ENCODE measurements at regions of chr7 and their contacts with region 1.

Region 1: GRCh38 chr7:30564243-30564892 is 30.3 kb upstream of the GARS1 start:
- DNase-seq: peak; percentile 74 to 83
- H3K4me3 ChIP-seq: no peak overlapping the region
- H3K27ac ChIP-seq: no peak overlapping the region
- H3K4me1 ChIP-seq: peaks cover 15% of the 10 kb centered on the region
- H3K27me3 ChIP-seq: no peaks in the 10 kb centered on the region
- CTCF ChIP-seq: peak; percentile 97

Region 2: DNA sequence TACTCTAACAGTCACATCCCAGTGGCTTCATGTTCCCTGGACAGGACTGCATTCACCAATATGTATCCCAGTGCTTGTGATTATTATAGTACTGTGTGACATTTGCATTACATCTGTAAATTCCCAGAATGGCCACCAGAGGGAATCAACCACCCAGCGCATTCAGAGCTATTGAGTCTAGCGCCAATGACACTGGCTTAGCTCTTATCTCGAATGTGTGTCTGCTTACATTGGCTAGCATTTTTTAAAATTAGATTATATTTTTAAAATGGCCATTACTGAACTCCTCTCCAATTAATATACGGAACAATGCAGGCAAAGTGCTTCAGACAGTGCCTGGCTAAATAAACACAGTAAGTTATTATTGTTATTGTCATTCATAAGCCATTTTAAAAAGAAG is 1642.5 kb before region 1 on chr7:
- CTCF ChIA-PET with region 1: interaction called, 3 read pairs
- POLR2A ChIA-PET with region 1: no interaction called
- intact Hi-C with region 1: loop called (anchors 5 kb)
- DNase-seq: peak; percentile 29 to 65
- H3K4me3 ChIP-seq: no peak overlapping the region
- H3K27ac ChIP-seq: no peak overlapping the region
- H3K4me1 ChIP-seq: peaks cover 10% of the 10 kb centered on the region; the same call in 1 of the 2 replicates
- H3K27me3 ChIP-seq: no peaks in the 10 kb centered on the region
- CTCF ChIP-seq: peak; percentile 97

Region 3: DNA sequence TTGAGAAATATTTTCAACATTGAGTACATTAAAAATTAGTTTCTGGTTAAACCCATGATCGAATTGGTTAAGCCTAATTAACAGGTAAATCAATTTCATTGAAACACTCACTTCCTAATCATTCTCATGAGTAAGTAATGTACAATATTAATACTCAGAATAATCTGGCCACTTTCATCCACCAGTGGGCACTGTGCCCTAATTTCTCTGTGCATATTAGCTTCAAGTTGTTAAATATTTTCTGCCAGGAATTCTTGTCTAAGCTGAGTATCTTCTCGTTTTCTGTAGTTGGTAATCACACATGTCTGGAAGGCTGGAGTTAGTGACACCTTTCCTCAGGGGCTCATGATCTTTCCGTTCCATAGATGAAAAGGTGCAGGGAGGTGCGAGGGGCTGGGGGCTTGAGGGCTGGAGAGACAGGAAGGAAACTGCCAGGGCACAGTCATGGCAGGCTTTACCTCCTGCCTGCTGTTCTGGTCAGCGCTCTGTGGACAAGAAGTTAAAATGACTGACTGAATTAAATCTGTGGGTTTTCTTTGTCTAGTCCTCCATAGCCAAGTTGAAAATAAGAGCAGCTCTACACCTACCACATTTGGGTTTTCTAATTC is 686.2 kb before region 1 on chr7:
- CTCF ChIA-PET with region 1: no interaction called
- POLR2A ChIA-PET with region 1: no interaction called
- intact Hi-C with region 1: loop called (anchors 1 kb)
- DNase-seq: peak; percentile 50 to 59
- H3K4me3 ChIP-seq: no peak overlapping the region
- H3K27ac ChIP-seq: no peak overlapping the region
- H3K4me1 ChIP-seq: no peaks in the 10 kb centered on the region
- H3K27me3 ChIP-seq: no peaks in the 10 kb centered on the region
- CTCF ChIP-seq: peak; percentile 90

Region 4: GRCh38 chr7:30164567-30164966 is 399.8 kb before region 1 on chr7:
- CTCF ChIA-PET with region 1: no interaction called
- POLR2A ChIA-PET with region 1: interaction called, 8 read pairs
- intact Hi-C with region 1: loop called (anchors 1 kb)
- DNase-seq: peak; percentile 32 to 68
- H3K4me3 ChIP-seq: no peak overlapping the region
- H3K27ac ChIP-seq: no peak overlapping the region
- H3K4me1 ChIP-seq: peaks cover 52% of the 10 kb centered on the region
- H3K27me3 ChIP-seq: no peaks in the 10 kb centered on the region
- CTCF ChIP-seq: peak; percentile 86

Region 5: DNA sequence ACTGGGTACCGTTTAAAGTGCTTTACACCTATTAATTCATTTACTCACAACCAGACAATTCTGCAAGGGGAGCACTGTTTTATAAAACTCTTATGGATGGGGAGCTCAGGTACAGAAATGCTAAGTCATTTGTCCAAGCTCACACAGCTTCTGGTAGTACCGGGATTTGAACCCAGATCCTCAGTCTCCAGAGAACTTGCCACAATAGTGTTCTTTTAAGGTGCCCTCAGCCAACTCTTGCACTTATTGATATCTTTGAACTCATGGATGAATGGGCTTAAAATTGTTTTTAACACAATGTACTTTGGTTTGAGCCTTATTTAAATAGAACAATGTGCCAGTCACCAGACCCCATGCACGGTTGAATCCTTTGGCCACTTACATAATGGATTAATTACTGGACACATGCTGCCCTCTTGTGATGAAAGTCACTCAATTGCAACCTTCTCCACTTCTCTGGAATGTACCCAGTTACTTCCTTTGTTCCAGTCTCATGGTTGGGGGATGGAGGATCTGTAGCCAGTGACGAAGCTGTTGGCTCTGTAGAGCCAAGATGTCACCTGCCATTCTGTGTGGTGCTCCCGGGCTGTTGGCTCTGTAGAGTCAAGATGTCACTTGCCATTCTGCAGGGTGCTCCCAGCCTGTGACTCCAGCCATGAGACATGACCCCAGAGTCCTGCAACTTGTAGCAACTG is 151.4 kb before region 1 on chr7:
- CTCF ChIA-PET with region 1: interaction called, 3 read pairs
- POLR2A ChIA-PET with region 1: no interaction called
- intact Hi-C with region 1: loop called (anchors 2 kb)
- DNase-seq: peak; percentile 40 to 80
- H3K4me3 ChIP-seq: no peak overlapping the region
- H3K27ac ChIP-seq: no peak overlapping the region
- H3K4me1 ChIP-seq: no peaks in the 10 kb centered on the region
- H3K27me3 ChIP-seq: no peaks in the 10 kb centered on the region
- CTCF ChIP-seq: peak; percentile 84

Region 6: DNA sequence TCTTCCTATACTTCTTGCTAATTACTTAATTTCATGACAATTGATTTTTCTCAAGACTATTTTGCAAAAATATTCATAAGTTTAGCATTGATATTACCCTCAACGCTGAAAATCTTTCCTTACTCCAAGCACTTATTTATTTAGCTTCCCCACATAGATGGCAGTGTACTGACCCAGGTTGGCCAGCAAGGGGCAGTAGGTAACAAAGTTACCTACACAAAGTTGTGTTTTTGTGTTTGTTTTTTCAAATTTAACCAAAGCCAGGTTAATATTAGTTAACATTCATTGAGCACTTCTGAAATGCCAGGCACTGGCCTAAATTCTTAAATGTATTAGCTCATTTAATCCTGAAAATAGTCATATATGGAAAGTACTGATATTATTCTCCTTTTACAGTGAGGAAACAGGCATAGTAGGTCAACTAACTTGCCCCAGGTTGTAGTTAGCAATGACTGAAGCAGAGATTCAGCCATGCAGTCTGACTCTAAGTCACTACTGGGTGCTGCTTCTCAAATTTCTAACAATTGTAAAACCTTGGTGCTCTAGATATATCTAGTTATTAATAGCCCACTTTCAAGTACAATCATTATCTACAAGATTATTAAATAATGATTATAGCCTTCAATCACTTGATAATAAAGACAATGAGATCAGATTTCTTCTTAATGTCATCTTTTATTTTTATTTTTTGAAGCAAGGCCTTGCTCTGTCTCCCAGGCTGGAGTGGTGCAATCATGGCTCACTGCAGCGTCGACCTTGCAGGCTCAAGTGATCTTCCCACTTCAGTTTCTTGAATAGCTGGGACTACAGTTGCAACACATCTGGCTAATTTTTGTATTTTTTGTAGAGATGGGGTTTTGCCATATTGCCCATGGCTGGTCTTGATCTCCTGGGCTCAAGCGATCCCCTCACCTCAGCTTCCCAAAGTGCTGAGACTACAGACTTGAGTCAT is 54.0 kb before region 1 on chr7:
- CTCF ChIA-PET with region 1: interaction called, 20 read pairs
- POLR2A ChIA-PET with region 1: no interaction called
- intact Hi-C with region 1: loop called (anchors 2 kb)
- DNase-seq: peak in 1 of 2 experiments; percentile 41
- H3K4me3 ChIP-seq: no peak overlapping the region
- H3K27ac ChIP-seq: no peak overlapping the region
- H3K4me1 ChIP-seq: peaks cover 36% of the 10 kb centered on the region
- H3K27me3 ChIP-seq: no peaks in the 10 kb centered on the region
- CTCF ChIP-seq: peak; percentile 94

Region 7: GRCh38 chr7:30585675-30586074 is 21.3 kb after region 1 on chr7:
- CTCF ChIA-PET with region 1: no interaction called
- POLR2A ChIA-PET with region 1: no interaction called
- intact Hi-C with region 1: no loop called
- DNase-seq: no peak
- H3K4me3 ChIP-seq: no peak overlapping the region
- H3K27ac ChIP-seq: no peak overlapping the region
- H3K4me1 ChIP-seq: no peaks in the 10 kb centered on the region
- H3K27me3 ChIP-seq: no peaks in the 10 kb centered on the region
- CTCF ChIP-seq: no peak

Region 8: DNA sequence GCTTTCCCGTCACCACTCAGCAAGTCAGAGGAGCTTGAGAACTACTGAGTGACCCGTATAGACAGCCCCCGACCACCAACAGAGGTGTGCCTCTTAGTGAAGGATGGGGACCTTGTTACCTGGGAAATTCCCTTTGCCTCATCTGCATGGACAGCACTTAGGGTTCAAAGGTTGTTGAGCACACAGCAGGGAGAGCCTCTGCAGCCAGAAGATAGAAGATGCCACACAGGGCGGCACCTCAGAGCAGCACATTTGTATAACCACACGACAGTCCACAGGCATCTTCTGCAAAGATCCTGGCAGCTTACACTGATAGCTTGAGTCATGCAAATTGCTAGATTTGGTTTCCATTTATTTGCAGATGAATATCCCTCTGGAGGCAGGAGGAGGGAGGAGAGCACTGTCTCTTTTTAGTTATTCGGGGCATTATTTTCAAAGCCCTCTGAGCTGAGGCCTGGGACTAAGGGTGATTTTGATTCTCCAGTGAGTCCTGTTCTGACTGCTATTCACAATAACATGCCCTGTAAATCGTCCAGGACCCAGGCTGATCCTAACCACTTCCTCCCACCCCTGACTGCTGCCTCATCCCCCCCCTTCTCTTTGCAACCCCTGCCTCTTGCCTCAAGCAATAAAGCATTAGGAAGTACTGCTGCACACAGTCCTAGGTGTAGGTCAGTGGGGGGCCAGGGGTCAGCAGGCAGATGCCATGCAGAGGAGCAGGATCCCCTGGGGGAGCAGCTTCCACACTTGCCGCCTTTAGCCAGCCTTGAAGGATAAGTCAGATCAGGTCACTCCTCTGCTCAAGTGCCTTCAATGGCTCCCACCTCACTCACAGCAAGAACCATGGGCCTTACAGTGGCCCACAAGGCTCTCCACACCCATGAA is 162.9 kb after region 1 on chr7:
- CTCF ChIA-PET with region 1: no interaction called
- POLR2A ChIA-PET with region 1: no interaction called
- intact Hi-C with region 1: no loop called
- DNase-seq: no peak
- H3K4me3 ChIP-seq: no peak overlapping the region
- H3K27ac ChIP-seq: no peak overlapping the region
- H3K4me1 ChIP-seq: no peaks in the 10 kb centered on the region
- H3K27me3 ChIP-seq: peaks cover 91% of the 10 kb centered on the region
- CTCF ChIP-seq: no peak

Region 9: DNA sequence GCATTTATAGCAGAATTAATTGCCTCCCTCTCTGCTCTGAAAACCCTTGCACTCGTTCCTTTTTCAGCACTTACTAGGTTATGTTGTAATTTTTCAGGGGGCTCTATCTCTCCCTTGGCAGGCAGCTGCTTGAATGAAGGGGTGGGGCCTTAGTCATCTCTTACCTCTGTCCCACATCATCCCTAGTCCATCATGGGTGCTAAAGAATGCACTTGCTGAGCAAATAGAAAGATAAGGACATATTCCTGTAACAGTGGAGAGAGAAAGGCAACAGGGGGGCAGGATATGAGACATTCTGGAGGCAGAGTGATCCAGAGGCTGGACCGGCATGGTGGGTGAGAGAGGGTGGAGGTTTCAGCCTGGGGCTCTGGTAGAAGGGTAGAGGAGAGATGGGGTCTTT is 266.9 kb after region 1 on chr7:
- CTCF ChIA-PET with region 1: no interaction called
- POLR2A ChIA-PET with region 1: no interaction called
- intact Hi-C with region 1: no loop called
- DNase-seq: no peak
- H3K4me3 ChIP-seq: no peak overlapping the region
- H3K27ac ChIP-seq: no peak overlapping the region
- H3K4me1 ChIP-seq: peaks cover 10% of the 10 kb centered on the region
- H3K27me3 ChIP-seq: no peaks in the 10 kb centered on the region
- CTCF ChIP-seq: no peak